ENCODE measurements at regions of chr2 and their contacts with region 1.

Region 1: GRCh38 chr2:233513953-233514655 is 52.5 kb downstream of the USP40 start:
- DNase-seq: no peak
- ATAC-seq: no peak
- H3K4me3 ChIP-seq: no peak overlapping the region
- H3K27ac ChIP-seq: no peak overlapping the region
- H3K4me1 ChIP-seq: no peaks in the 10 kb centered on the region
- H3K27me3 ChIP-seq: no peaks in the 10 kb centered on the region
- CTCF ChIP-seq: no peak
- POLR2A ChIP-seq: no peak
- RAD21 ChIP-seq: no peak

Region 2: DNA sequence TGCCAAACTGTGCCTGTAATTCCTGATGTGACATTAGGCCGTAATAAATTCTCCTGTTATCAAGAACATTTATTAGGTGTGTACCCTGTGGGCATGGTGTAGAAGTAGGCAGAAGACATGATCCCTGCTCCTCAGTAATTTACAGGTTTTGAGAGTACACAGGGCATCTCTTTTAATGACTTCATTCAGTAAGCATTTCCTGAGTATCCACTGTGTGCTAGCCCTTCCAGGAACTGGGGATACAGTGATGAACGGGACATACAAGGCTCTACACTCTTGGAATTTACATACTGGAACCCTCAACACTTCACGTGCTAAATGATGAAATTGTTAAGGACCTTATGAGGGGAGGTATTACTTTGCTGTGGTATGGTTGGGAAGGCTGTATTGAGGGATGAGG is 1522.4 kb before region 1 on chr2:
- CTCF ChIA-PET with region 1: no interaction called
- POLR2A ChIA-PET with region 1: no interaction called
- dilution Hi-C with region 1: no loop called
- in situ Hi-C with region 1: no loop called
- intact Hi-C with region 1: no loop called
- DNase-seq: peak; percentile 26
- ATAC-seq: peak; percentile 77
- H3K4me3 ChIP-seq: no peak overlapping the region
- H3K27ac ChIP-seq: no peak overlapping the region
- H3K4me1 ChIP-seq: peaks cover 3% of the 10 kb centered on the region
- H3K27me3 ChIP-seq: no peaks in the 10 kb centered on the region
- CTCF ChIP-seq: no peak
- POLR2A ChIP-seq: no peak
- RAD21 ChIP-seq: no peak

Region 3: DNA sequence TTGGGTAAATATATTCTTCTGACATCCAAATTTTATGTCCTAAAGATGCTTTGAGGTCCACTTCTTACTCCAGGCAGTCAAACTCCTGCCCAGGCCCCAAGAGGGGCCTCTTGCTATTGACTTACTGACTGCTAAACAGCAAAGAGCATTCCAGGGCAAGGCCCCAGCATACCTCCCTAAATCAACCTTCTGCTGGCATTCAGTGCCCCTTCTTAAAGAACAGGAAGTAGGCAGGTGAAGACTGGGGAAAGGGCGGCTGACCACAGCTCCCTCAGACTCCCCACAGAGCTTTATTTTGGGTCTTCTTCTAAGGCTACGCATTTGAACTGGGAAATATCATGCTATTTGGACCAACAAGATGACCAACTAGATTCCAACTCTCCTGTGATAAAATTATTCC is 16.4 kb before region 1 on chr2:
- CTCF ChIA-PET with region 1: interaction called, 5 read pairs
- POLR2A ChIA-PET with region 1: no interaction called
- dilution Hi-C with region 1: no loop called
- in situ Hi-C with region 1: no loop called
- intact Hi-C with region 1: loop called (anchors 2 kb)
- DNase-seq: no peak
- ATAC-seq: no peak
- H3K4me3 ChIP-seq: no peak overlapping the region
- H3K27ac ChIP-seq: no peak overlapping the region
- H3K4me1 ChIP-seq: peaks cover 2% of the 10 kb centered on the region; the same call in 1 of the 2 replicates
- H3K27me3 ChIP-seq: no peaks in the 10 kb centered on the region
- CTCF ChIP-seq: no peak
- POLR2A ChIP-seq: no peak
- RAD21 ChIP-seq: no peak

Region 4: GRCh38 chr2:233535276-233535675 is 21.2 kb after region 1 on chr2:
- CTCF ChIA-PET with region 1: no interaction called
- POLR2A ChIA-PET with region 1: no interaction called
- dilution Hi-C with region 1: no loop called
- in situ Hi-C with region 1: no loop called
- intact Hi-C with region 1: loop called (anchors 2 kb)
- DNase-seq: no peak
- ATAC-seq: no peak
- H3K4me3 ChIP-seq: no peak overlapping the region
- H3K27ac ChIP-seq: no peak overlapping the region
- H3K4me1 ChIP-seq: no peaks in the 10 kb centered on the region
- H3K27me3 ChIP-seq: no peaks in the 10 kb centered on the region
- CTCF ChIP-seq: no peak
- POLR2A ChIP-seq: no peak
- RAD21 ChIP-seq: no peak

Measured in IMR-90 (cell line).